Mammary epithelial cell (primary cell): ENCODE measurements at regions of chr7 and their contacts with region 1.

Region 1: GRCh38 chr7:92833024-92833765 is 3.2 kb downstream of the CDK6 start:
- DNase-seq: peak; percentile 82
- H3K4me3 ChIP-seq: peak overlapping the region; percentile 83 to 87 (median 83)
- H3K27ac ChIP-seq: peak overlapping the region; percentile 94
- H3K4me1 ChIP-seq: peaks cover 35% of the 10 kb centered on the region
- H3K27me3 ChIP-seq: no peaks in the 10 kb centered on the region
- CTCF ChIP-seq: peak; percentile 71 to 91

Region 2: DNA sequence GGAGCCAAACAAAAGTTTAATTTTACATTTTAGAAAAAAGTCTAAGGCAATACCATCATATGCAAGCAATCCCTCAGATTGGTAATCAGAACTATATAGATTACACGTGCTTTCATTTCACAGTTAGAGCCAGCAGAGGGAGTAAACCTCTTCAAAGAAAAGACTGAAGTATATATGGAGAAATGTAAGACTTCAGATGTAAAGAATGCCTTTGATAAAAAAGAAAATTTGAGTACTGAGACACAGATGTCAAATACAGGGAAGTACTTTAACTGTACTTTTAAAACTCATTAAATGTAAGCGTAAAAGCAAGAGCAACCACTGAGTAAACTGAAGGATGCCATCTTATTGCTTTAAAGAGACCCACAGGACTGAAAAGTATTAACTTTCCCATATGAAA is 141.6 kb before region 1 on chr7:
- CTCF ChIA-PET with region 1: no interaction called
- dilution Hi-C with region 1: no loop called
- in situ Hi-C with region 1: loop called (anchors 5 kb)
- intact Hi-C with region 1: loop called (anchors 1 kb)
- DNase-seq: peak; percentile 54
- H3K4me3 ChIP-seq: no peak overlapping the region
- H3K27ac ChIP-seq: no peak overlapping the region
- H3K4me1 ChIP-seq: peaks cover 14% of the 10 kb centered on the region
- H3K27me3 ChIP-seq: no peaks in the 10 kb centered on the region
- CTCF ChIP-seq: peak; percentile 48 to 63

Region 3: DNA sequence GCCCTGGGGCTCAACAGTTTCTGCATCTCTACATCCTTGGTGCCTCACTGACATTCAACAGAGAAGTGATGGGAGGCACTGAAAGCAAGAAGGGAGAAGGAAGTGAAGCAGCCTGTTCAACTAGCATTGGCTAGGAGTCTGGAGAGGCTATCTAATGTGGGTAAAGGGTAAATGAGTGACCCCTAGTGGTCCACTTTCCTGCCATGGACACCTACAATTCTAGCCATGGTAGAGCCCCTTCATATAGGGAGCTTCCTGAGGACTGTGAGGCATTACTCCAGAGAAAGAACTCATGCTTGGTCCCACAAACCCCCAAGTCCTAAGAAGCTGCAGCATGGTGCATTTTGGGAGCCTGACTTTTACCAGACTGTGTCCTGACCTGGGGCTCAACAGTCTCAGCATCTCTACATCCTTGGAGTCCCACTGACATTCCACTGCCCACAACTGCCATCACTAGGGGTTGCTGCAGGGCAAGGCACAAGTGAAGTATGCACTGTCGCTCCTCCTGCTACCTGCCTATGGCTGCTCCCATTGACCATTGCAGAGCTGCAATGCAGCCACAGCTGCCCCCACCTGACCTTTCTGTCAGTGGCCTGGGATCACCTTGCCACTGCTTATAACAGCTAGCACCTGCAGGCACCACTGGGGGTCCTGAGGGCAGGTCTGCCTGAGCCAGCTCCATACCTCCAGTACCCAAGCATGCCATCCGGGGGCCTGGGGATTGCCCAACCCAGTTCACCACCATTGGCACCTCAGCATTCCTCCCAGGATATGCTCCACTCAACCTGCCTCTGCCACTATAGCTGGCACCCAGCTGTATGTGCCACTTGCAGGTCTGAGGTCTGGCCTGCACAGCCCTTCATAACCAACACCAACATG is 47.3 kb after region 1 on chr7:
- CTCF ChIA-PET with region 1: no interaction called
- dilution Hi-C with region 1: no loop called
- in situ Hi-C with region 1: no loop called
- intact Hi-C with region 1: loop called (anchors 1 kb)
- DNase-seq: peak; percentile 18
- H3K4me3 ChIP-seq: no peak overlapping the region
- H3K27ac ChIP-seq: no peak overlapping the region
- H3K4me1 ChIP-seq: peaks cover 9% of the 10 kb centered on the region
- H3K27me3 ChIP-seq: no peaks in the 10 kb centered on the region
- CTCF ChIP-seq: peak in 1 of 2 donors; percentile 14

Region 4: GRCh38 chr7:92933810-92934449 is 100.7 kb after region 1 on chr7:
- CTCF ChIA-PET with region 1: interaction called, 13 read pairs
- dilution Hi-C with region 1: no loop called
- in situ Hi-C with region 1: no loop called
- intact Hi-C with region 1: no loop called
- DNase-seq: peak; percentile 63
- H3K4me3 ChIP-seq: no peak overlapping the region
- H3K27ac ChIP-seq: no peak overlapping the region
- H3K4me1 ChIP-seq: no peaks in the 10 kb centered on the region
- H3K27me3 ChIP-seq: no peaks in the 10 kb centered on the region
- CTCF ChIP-seq: no peak

Region 5: DNA sequence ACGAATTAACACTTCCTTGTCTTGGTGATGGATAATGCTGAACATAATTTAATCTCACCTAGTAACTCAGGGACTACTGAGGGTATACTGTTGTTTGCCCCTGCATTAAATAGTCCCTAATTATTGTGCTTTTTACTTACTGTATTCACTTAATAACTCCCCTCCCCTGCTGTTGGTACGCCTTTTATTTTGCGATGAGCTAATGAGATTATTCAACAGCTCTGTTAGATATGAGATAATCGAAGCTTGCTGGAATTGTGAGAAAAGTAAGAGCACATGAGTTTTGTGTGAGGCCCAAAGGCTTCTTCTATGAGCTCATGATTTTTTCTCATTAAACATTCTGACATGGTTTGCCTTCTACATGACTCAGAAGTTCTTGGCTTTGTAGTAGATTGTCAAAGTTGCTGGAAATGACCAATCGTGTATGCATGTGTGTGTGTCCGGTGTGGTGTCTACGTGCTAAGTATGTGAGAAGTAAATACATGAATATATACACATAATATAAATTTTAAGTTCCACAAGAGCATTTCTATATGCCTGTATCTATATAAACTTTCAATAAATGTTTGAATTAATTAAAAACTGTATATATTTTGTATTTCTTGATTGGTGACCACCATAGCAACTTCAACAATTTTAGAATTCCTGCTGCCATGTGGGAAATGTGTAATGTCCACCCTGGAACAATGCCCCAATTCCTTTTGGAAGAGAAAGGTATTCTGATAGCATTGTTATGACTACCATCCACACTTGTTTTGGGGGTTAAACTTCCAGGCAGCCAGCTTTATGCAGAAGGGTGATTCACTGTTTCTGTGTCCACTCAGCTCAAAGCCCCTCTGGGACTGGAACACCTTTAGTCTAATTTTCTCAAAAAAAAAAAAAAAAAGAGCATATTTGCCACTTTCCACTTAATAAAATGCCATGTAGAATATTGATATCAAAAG is 178.4 kb after region 1 on chr7:
- CTCF ChIA-PET with region 1: interaction called, 15 read pairs
- dilution Hi-C with region 1: no loop called
- in situ Hi-C with region 1: no loop called
- intact Hi-C with region 1: no loop called
- DNase-seq: peak; percentile 86
- H3K4me3 ChIP-seq: no peak overlapping the region
- H3K27ac ChIP-seq: peak overlapping the region; percentile 68
- H3K4me1 ChIP-seq: no peaks in the 10 kb centered on the region
- H3K27me3 ChIP-seq: no peaks in the 10 kb centered on the region
- CTCF ChIP-seq: no peak

Region 6: GRCh38 chr7:93284908-93285307 is 451.7 kb after region 1 on chr7:
- CTCF ChIA-PET with region 1: no interaction called
- dilution Hi-C with region 1: no loop called
- in situ Hi-C with region 1: no loop called
- intact Hi-C with region 1: no loop called
- DNase-seq: no peak
- H3K4me3 ChIP-seq: no peak overlapping the region
- H3K27ac ChIP-seq: no peak overlapping the region
- H3K4me1 ChIP-seq: no peaks in the 10 kb centered on the region
- H3K27me3 ChIP-seq: no peaks in the 10 kb centered on the region
- CTCF ChIP-seq: no peak

Region 7: DNA sequence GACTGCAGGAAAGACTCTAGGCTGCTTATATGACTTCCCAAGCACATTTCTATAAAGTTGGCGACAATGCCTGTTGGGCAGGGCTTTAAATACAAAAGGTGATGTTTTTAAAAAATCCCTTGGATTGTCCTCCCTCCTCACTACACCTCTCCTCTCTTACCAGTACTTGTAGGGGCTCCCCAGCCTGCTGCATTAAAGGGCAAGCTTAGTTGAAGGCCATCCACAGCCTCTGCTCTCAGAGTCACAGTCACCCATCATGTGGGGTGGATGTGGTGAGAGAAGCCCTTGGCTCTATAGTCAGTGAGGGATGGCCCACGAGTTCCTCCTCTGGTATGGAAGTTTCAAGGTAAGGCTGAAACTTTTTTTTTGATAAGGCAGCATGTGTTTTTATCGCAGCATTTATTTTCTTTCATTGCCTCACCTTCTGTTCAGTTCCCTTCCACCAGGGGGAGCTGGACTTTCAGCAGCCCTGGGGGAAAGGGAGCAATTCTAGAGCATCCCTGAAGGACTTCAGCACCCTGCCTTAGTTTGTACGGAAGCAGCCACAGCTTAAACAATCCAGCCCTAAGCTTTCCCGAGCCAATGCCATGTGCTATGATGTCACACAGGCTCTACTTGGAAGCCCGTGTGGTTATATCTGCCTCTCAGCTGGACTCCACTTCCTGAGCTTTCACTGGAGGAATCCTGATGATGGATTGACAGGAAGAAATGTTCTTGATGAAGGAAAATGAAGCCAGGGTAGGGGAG is 609.5 kb after region 1 on chr7:
- CTCF ChIA-PET with region 1: no interaction called
- dilution Hi-C with region 1: no loop called
- in situ Hi-C with region 1: no loop called
- intact Hi-C with region 1: no loop called
- DNase-seq: peak; percentile 19
- H3K4me3 ChIP-seq: no peak overlapping the region
- H3K27ac ChIP-seq: no peak overlapping the region
- H3K4me1 ChIP-seq: no peaks in the 10 kb centered on the region
- H3K27me3 ChIP-seq: peaks cover 8% of the 10 kb centered on the region
- CTCF ChIP-seq: peak; percentile 82 to 86